Head of caudate nucleus (tissue), 42 donors: ENCODE measurements at regions of chr12 and their contacts with region 1.

Region 1: DNA sequence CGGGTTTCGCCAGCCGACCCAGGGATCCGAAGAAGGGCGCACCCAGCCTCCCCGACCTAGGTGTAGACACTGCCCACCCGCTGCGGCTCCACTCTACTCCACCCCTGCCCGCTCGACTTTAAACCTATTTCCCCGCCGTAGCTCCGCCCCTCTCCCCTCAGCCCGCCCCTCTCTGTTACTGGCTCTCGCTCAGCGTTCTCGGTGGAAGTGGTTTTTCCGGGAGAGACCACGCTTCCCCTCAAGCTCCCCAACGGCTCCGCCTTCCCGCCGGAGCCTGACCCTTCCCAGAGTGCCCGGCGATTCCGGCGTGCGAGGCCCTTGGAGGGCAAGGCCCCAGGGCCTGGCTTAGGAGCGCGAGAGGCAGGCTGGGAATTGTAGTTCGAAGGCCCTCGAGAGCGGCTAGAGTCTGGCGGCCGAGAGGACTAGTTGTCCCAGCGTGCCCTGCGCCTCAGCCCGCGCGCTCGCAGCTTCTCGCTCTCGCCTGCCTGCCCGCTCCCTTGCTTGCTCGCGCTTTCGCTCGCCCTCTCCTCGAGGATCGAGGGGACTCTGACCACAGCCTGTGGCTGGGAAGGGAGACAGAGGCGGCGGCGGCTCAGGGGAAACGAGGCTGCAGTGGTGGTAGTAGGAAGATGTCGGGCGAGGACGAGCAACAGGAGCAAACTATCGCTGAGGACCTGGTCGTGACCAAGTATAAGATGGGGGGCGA is at the start of gene PA2G4:
- DNase-seq: peak; percentile 93 to 99 (median 98)

Region 2: GRCh38 chr12:55996715-55997534 is 107.3 kb before region 1 on chr12 and contains the start of gene SUOX:
- intact Hi-C with region 1: loop called (anchors 10 kb)
- DNase-seq: peak; percentile 89 to 99 (median 98)

Region 3: GRCh38 chr12:56041552-56042429 is 62.5 kb before region 1 on chr12 and contains the start of gene RPS26:
- intact Hi-C with region 1: loop called (anchors 10 kb)
- DNase-seq: peak; percentile 83 to 97 (median 93)

Region 4: DNA sequence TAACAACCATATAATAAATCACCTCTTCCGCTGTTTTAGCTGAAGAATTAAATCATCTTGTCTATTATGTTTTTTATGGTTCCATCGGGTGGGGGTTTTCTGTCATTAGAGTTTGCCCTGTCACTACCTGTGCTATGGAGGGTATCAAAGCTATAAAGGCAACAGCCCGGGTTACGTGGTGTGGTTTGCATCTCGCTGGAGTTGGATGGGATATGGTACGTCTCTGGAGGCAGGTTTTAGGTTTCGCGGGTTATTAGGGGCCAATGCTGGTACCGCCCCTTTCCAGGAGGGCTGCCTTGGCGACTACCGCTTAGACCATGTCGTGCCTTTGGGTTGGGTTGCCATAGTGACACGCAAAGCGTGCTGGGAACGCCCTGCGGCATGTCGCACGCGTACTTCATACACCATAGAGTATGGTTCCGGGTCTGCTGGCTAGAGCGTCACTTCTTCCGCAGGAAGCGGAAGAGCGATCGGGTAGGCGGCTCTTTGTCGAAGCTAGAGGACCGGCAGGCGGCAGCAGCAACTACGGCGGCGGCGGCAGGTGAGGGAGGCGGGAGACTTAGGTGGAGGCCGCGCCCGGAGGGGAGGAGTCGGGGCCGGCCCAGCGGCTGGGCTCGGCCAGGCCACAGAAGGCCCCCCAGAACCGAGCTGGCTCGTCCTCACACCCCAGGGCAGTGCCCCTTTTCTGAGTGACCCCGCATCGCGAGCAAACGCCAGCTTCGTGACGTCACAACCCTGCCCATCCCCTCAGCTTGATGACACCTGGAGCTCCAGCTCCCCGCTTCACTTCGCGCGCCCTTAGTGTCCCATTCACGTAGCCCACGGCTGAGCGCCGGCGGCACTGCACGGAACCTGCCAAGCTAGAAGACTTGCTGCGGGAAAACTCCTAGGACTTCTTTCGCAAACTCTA is 13.8 kb after region 1 on chr12 and contains the start of gene ZC3H10:
- intact Hi-C with region 1: loop called (anchors 1 kb)
- DNase-seq: peak; percentile 92 to 99 (median 97)

Region 5: DNA sequence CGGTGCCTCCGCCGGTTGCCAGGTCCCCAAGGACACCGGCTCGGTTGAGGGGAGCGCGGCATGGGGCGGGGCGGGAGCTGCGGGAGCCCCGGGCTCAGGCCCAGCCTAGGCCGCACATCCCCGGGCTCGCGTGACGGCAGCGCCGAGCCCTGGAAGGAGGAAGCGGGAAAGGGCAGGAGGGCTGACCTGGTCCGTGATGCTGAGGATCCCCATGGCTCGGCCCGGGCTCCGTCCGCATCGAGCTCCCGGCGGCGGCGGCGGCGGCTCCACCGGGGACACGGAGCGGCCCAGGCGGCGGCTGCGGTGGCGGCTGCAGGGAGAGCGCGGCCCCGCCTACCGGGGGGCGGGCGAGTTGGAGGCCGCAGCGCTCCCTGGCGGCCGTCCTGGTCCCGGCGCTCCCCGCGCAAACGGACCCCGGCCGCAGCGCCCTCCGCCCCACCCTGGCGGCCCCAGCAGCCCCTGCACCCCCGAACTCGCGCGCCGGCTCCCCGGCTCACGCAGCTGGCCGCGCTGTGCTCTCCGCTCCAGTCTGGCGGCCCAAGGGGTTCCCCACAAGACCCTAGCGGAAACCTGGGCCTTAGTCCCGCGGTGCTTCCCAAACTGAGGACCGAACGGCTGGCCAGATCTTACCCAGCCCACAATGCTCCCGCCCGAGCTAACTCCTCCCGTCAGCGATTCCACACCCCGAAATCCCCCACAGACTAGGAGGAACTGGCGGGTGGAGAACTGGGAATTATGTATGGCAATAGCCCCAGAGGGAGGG is 154.0 kb after region 1 on chr12 and contains the start of gene ANKRD52:
- intact Hi-C with region 1: no loop called
- DNase-seq: peak; percentile 19 to 88 (median 80)